Activated CD4-positive, alpha-beta memory T cell treated with anti-CD3 and anti-CD28 coated beads for 36 hours (primary cell): ENCODE measurements at regions of chr1 and their contacts with region 1.

Region 1: DNA sequence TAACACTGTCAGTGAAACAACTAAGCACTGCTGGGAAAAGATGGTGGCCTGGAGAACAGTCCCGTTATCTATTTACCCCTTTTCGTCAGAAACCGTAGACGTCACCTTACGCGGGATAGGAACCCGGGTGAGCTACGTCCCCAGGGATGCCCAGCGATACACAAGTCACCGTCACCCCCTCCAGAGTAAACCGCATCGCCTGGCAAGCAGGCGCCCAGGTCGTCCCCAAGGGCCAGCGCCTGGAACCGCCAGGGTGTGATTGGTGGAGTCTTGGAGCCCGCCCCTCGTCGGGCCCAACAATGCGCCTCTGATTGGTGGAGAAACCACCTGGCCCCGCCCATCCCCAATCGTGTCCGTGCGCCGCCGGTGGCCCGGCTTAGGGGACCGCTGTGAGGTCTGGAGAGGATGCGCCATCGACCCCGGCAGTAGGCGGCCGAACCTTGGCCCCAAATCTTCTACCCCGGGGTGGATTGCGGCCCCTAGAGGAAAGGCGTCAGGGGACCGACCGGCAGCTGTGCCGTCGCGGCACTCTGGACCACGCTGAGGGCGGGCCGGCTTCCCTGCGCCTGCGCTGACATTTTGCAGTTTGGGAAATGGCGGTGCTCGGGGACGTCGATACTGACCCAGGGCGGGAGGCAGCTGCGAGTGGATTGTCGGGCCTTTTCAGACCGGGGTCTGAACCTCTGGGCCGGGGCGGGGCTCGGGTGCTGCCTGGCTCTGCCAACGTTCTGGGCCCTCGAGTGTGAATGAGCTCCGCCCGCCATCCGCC is 34.4 kb downstream of the SLC2A1 start:
- DNase-seq: peak; percentile 95
- H3K4me3 Mint-ChIP-seq: peak overlapping the region; percentile 89
- H3K27ac Mint-ChIP-seq: peak overlapping the region; percentile 97
- H3K4me1 Mint-ChIP-seq: peaks cover 22% of the 10 kb centered on the region
- H3K27me3 Mint-ChIP-seq: no peaks in the 10 kb centered on the region

Region 2: GRCh38 chr1:42681741-42682483 is 242.4 kb before region 1 on chr1 and contains the start of gene YBX1:
- CTCF ChIA-PET with region 1: no interaction called
- POLR2A ChIA-PET with region 1: no interaction called
- intact Hi-C with region 1: loop called (anchors 5 kb)
- DNase-seq: peak; percentile 97
- H3K4me3 Mint-ChIP-seq: peak within 1 kb of the TSS; percentile 93
- H3K27ac Mint-ChIP-seq: peak within 1 kb of the TSS; percentile 97
- H3K4me1 Mint-ChIP-seq: peaks cover 45% of the 10 kb centered on the region
- H3K27me3 Mint-ChIP-seq: no peaks in the 10 kb centered on the region
- total RNA-seq, gene YBX1: 1,101 to 1,134 TPM

Region 3: DNA sequence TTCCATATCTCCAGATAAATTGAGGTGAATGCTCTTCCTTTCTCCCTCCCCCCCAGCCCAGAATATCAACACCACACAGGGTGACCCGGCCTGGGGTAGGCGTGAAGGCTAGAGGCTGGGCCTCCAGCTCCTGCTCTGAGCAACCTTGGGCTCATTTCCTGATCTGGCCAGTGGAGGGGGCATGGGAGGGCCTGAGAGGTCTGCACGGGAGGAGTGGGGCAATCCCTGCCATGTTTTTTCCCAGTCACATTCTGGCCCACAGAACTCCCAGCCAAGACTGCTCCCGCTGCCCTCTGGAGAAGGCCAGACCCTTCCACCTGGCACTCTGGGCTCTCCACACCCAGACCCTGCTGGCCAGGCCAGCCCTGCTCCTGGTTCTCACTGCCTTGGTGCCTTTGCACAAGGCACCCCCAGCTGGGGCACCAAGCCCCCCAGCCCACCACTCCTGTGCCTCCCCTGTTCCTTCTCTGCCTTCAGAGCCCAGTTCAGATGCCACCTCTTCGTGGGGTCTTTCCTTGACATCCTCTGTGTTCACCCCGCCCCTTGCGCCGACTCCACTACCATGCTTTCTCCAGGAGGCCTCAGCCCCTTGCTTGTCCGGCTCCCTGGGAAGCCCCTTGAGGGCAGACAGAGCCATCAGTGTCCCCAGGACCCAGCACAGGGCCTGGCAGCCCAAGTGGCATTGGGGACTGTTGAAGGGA is 188.0 kb before region 1 on chr1:
- CTCF ChIA-PET with region 1: no interaction called
- POLR2A ChIA-PET with region 1: no interaction called
- intact Hi-C with region 1: no loop called
- DNase-seq: peak; percentile 17
- H3K4me3 Mint-ChIP-seq: no peak overlapping the region
- H3K27ac Mint-ChIP-seq: no peak overlapping the region
- H3K4me1 Mint-ChIP-seq: peaks cover 5% of the 10 kb centered on the region
- H3K27me3 Mint-ChIP-seq: no peaks in the 10 kb centered on the region

Region 4: DNA sequence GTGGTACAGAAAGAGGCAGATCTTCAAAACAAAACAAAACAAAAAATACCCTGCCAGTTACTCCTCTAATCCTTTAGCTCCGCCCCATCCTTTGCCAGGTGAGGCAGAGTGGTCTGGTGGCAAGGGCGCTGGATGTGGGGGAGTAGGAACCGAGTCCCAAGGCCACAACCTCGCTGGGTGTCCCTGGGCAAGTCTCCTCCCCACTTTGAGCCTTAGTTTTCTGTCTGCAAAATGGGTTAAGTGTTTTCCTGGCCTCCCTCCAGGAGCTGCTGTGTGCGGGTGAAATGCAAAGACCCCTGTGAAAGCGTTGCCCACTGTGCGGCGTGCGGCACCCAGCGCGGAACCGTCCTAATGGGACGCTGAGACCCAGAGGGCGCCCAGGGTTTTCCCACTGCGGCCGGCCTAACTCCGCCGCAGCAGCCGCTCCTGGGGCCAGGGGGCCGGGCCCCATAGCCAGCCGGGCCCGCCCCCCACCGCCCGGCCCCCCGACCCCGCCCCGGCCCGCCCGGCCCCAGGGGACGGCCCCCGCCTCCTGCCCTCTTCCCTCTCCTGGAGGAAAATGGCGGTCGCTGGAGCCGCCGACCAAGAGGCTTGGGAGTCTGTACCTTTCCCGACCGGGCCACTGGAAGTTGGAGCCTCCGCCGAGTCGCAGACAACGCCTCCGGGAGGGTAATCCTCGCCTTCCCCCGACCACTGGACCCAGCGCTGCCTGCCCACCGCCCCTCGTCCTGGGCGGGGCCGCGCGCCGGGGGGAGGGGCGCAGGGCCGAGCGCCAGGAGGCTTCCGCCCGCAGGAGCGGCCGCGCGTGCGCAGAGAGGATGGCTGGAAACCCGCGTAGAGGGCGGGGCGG is 107.5 kb before region 1 on chr1 and contains the starts of genes ERMAP and SVBP:
- CTCF ChIA-PET with region 1: no interaction called
- POLR2A ChIA-PET with region 1: no interaction called
- intact Hi-C with region 1: loop called (anchors 10 kb)
- DNase-seq: peak; percentile 96
- H3K4me3 Mint-ChIP-seq: peak within 1 kb of the TSS; percentile 76
- H3K27ac Mint-ChIP-seq: peak within 1 kb of the TSS; percentile 75
- H3K4me1 Mint-ChIP-seq: peaks cover 17% of the 10 kb centered on the region
- H3K27me3 Mint-ChIP-seq: no peaks in the 10 kb centered on the region
- total RNA-seq, gene ERMAP: 3.4 to 4.5 TPM
- total RNA-seq, gene SVBP: 16.8 to 18.8 TPM

Region 5: DNA sequence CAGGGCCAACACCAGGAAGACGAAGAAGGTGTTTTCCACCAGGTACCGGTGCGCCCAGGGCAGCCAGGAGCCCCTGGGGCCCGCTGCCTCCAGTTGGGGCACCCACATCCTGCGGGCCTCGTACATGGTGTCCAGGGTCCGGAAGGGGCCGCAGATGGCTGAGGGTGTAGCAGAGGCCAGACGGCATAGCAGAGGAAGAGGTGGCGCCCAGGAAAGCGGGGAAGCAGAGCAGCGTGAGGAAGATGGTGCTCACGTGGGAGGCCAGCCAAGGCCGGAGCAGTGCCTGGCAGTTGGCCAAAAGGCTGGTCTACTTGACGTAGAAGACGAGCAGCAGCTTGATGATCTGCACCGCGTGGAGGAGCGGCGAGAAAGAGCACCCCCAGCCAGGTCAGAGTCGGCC is 37.5 kb before region 1 on chr1:
- CTCF ChIA-PET with region 1: no interaction called
- POLR2A ChIA-PET with region 1: no interaction called
- intact Hi-C with region 1: no loop called
- DNase-seq: no peak
- H3K4me3 Mint-ChIP-seq: no peak overlapping the region
- H3K27ac Mint-ChIP-seq: no peak overlapping the region
- H3K4me1 Mint-ChIP-seq: no peaks in the 10 kb centered on the region
- H3K27me3 Mint-ChIP-seq: peaks cover 3% of the 10 kb centered on the region

Region 6: GRCh38 chr1:42913426-42914091 is 10.7 kb before region 1 on chr1:
- CTCF ChIA-PET with region 1: interaction called, 61 read pairs
- POLR2A ChIA-PET with region 1: no interaction called
- intact Hi-C with region 1: no loop called
- DNase-seq: peak; percentile 52
- H3K4me3 Mint-ChIP-seq: no peak overlapping the region
- H3K27ac Mint-ChIP-seq: no peak overlapping the region
- H3K4me1 Mint-ChIP-seq: peaks cover 6% of the 10 kb centered on the region
- H3K27me3 Mint-ChIP-seq: peaks cover 6% of the 10 kb centered on the region

Region 7: GRCh38 chr1:42941640-42942330 is 17.5 kb after region 1 on chr1:
- CTCF ChIA-PET with region 1: interaction called, 39 read pairs
- POLR2A ChIA-PET with region 1: interaction called, 4 read pairs
- intact Hi-C with region 1: no loop called
- DNase-seq: peak; percentile 64
- H3K4me3 Mint-ChIP-seq: no peak overlapping the region
- H3K27ac Mint-ChIP-seq: peak overlapping the region; percentile 81
- H3K4me1 Mint-ChIP-seq: peaks cover 95% of the 10 kb centered on the region
- H3K27me3 Mint-ChIP-seq: no peaks in the 10 kb centered on the region

Region 8: GRCh38 chr1:43171876-43172526 is 247.7 kb after region 1 on chr1 and contains the starts of genes CFAP57 and EBNA1BP2:
- CTCF ChIA-PET with region 1: interaction called, 3 read pairs
- POLR2A ChIA-PET with region 1: no interaction called
- intact Hi-C with region 1: loop called (anchors 1 kb)
- DNase-seq: peak; percentile 96
- H3K4me3 Mint-ChIP-seq: peak within 1 kb of the TSS; percentile 98
- H3K27ac Mint-ChIP-seq: peak within 1 kb of the TSS; percentile 76
- H3K4me1 Mint-ChIP-seq: peaks cover 27% of the 10 kb centered on the region
- H3K27me3 Mint-ChIP-seq: peaks cover 16% of the 10 kb centered on the region
- total RNA-seq, gene CFAP57: 0.43 TPM in 1 of 2 experiments, not detected in the other
- total RNA-seq, gene EBNA1BP2: 97.5 to 104 TPM